Activated B cell treated with CpG ODN at 0.5 μM for 24 hours (primary cell): ENCODE measurements at regions of chr6 and their contacts with region 1.

Region 1: GRCh38 chr6:130885392-130886192 is 58.4 kb downstream of the SMLR1 start:
- DNase-seq: no peak
- ATAC-seq: peak; percentile 81
- H3K4me3 Mint-ChIP-seq: no peak overlapping the region
- H3K27ac Mint-ChIP-seq: no peak overlapping the region
- H3K4me1 Mint-ChIP-seq: no peaks in the 10 kb centered on the region
- H3K27me3 Mint-ChIP-seq: no peaks in the 10 kb centered on the region
- CTCF ChIP-seq: peak; percentile 30

Region 2: GRCh38 chr6:129525055-129525454 is 1360.5 kb before region 1 on chr6:
- CTCF ChIA-PET with region 1: no interaction called
- POLR2A ChIA-PET with region 1: no interaction called
- intact Hi-C with region 1: no loop called
- DNase-seq: no peak
- ATAC-seq: no peak
- H3K4me3 Mint-ChIP-seq: no peak overlapping the region
- H3K27ac Mint-ChIP-seq: no peak overlapping the region
- H3K4me1 Mint-ChIP-seq: no peaks in the 10 kb centered on the region
- H3K27me3 Mint-ChIP-seq: no peaks in the 10 kb centered on the region
- CTCF ChIP-seq: no peak

Region 3: DNA sequence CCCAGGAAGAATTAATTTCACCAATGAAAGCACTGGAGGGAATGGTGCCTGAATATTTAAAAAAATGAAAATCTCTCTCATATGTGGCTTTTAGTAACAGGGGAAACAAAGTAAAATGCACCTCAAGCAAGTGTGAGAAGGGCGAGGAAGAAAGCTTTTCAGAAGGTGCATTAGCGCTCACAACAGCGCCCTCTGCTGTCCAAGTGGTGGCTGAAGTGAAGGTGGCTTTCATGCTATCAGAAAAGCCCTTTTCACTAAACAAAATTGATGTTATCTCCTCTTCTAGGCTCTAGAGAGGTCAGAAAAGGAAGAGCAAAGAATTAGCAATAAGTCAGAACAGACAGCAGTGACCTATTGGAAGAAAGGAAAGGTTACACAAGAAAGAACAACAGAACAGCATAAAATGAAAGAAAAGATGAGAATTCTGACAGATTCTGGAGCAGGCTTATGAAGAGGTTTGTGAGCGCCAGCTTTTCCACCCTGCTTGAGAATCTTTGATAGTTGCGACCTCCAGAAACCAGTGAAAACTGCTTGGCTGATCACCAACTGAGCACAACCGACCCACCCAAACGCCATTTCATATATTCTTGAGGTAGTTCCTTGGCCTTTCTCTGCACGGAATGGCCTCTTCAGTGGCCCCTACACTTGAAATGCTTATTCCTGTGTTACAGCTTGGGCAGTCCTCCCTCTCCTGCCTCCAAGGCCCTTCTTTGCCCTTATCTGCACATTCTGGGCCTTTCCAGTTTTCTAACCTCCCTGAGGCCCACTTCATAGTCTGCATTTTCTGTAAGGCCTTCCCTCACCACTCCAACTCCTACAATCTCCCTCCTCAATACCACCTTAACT is 13.1 kb before region 1 on chr6:
- CTCF ChIA-PET with region 1: interaction called, 22 read pairs
- POLR2A ChIA-PET with region 1: no interaction called
- intact Hi-C with region 1: no loop called
- DNase-seq: peak; percentile 37
- ATAC-seq: no peak
- H3K4me3 Mint-ChIP-seq: no peak overlapping the region
- H3K27ac Mint-ChIP-seq: no peak overlapping the region
- H3K4me1 Mint-ChIP-seq: peaks cover 4% of the 10 kb centered on the region
- H3K27me3 Mint-ChIP-seq: no peaks in the 10 kb centered on the region
- CTCF ChIP-seq: peak; percentile 82

Region 4: GRCh38 chr6:131029626-131030297 is 144.2 kb after region 1 on chr6:
- CTCF ChIA-PET with region 1: no interaction called
- POLR2A ChIA-PET with region 1: no interaction called
- intact Hi-C with region 1: no loop called
- DNase-seq: no peak
- ATAC-seq: no peak
- H3K4me3 Mint-ChIP-seq: no peak overlapping the region
- H3K27ac Mint-ChIP-seq: no peak overlapping the region
- H3K4me1 Mint-ChIP-seq: peaks cover 24% of the 10 kb centered on the region
- H3K27me3 Mint-ChIP-seq: no peaks in the 10 kb centered on the region
- CTCF ChIP-seq: no peak

Region 5: DNA sequence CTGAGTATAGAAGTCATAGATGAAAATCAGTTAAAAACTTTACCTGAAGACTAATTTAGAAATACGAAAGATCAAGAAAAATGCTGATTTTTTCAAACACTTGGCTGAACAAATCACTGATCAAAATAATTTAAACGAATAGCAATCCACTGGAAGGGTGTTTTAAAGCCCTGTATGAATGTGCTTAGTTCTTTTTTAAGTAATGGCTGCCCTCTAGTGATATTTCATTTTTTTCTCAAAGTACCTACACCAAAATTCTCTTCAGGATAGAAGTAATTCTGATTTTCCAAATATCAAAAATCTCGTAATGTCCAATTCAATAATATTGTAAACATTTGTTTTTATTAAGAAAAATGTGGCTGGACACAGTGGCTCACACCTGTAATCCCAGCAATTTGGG is 282.2 kb after region 1 on chr6:
- CTCF ChIA-PET with region 1: interaction called, 13 read pairs
- POLR2A ChIA-PET with region 1: no interaction called
- intact Hi-C with region 1: loop called (anchors 1 kb)
- DNase-seq: no peak
- ATAC-seq: no peak
- H3K4me3 Mint-ChIP-seq: no peak overlapping the region
- H3K27ac Mint-ChIP-seq: no peak overlapping the region
- H3K4me1 Mint-ChIP-seq: no peaks in the 10 kb centered on the region
- H3K27me3 Mint-ChIP-seq: no peaks in the 10 kb centered on the region
- CTCF ChIP-seq: no peak

Region 6: GRCh38 chr6:131199568-131200272 is 314.1 kb after region 1 on chr6:
- CTCF ChIA-PET with region 1: interaction called, 5 read pairs
- POLR2A ChIA-PET with region 1: no interaction called
- intact Hi-C with region 1: loop called (anchors 1 kb)
- DNase-seq: peak; percentile 44
- ATAC-seq: peak; percentile 100
- H3K4me3 Mint-ChIP-seq: peak overlapping the region; percentile 72
- H3K27ac Mint-ChIP-seq: peak overlapping the region; percentile 87
- H3K4me1 Mint-ChIP-seq: peaks cover 36% of the 10 kb centered on the region
- H3K27me3 Mint-ChIP-seq: no peaks in the 10 kb centered on the region
- CTCF ChIP-seq: peak; percentile 16

Region 7: DNA sequence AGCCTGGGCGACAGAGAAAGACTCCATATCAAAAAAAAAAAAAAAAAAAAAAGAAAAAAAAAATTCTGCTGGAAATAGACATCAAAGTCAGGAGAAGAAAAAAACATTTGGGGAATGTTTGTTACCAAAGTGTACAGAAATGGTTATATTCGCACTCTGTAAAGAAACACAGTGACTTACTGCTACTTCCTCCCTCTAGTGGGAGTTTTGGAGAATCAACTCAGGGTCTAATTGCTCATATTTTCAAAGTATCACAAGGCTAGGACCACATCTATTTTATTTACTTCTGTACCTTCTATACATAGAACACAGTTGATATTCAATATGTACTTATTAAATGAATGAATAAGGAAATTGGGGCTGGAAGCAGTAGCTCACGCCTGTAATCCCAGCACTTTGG is 711.9 kb after region 1 on chr6:
- CTCF ChIA-PET with region 1: interaction called, 3 read pairs
- POLR2A ChIA-PET with region 1: no interaction called
- intact Hi-C with region 1: loop called (anchors 2 kb)
- DNase-seq: no peak
- ATAC-seq: no peak
- H3K4me3 Mint-ChIP-seq: no peak overlapping the region
- H3K27ac Mint-ChIP-seq: no peak overlapping the region
- H3K4me1 Mint-ChIP-seq: no peaks in the 10 kb centered on the region
- H3K27me3 Mint-ChIP-seq: no peaks in the 10 kb centered on the region
- CTCF ChIP-seq: no peak

Region 8: GRCh38 chr6:131909408-131910218 is 1024.0 kb after region 1 on chr6:
- CTCF ChIA-PET with region 1: no interaction called
- POLR2A ChIA-PET with region 1: no interaction called
- intact Hi-C with region 1: loop called (anchors 1 kb)
- DNase-seq: peak; percentile 36
- ATAC-seq: peak; percentile 96
- H3K4me3 Mint-ChIP-seq: no peak overlapping the region
- H3K27ac Mint-ChIP-seq: no peak overlapping the region
- H3K4me1 Mint-ChIP-seq: peaks cover 7% of the 10 kb centered on the region
- H3K27me3 Mint-ChIP-seq: peaks cover 23% of the 10 kb centered on the region
- CTCF ChIP-seq: peak; percentile 95